Endothelial cell of umbilical vein (primary cell): ENCODE measurements at regions of chr5 and their contacts with region 1.

Region 1: GRCh38 chr5:39283231-39283818 is 64.0 kb upstream of the FYB1 start:
- DNase-seq: peak; percentile 76
- H3K4me3 ChIP-seq: no peak overlapping the region
- H3K27ac ChIP-seq: no peak overlapping the region
- H3K4me1 ChIP-seq: no peaks in the 10 kb centered on the region
- H3K27me3 ChIP-seq: no peaks in the 10 kb centered on the region
- CTCF ChIP-seq: peak; percentile 50 to 67
- POLR2A ChIP-seq: no peak

Region 2: GRCh38 chr5:38208782-38209378 is 1074.4 kb before region 1 on chr5:
- CTCF ChIA-PET with region 1: no interaction called
- POLR2A ChIA-PET with region 1: no interaction called
- dilution Hi-C with region 1: no loop called
- intact Hi-C with region 1: loop called (anchors 10 kb)
- DNase-seq: peak; percentile 22
- H3K4me3 ChIP-seq: no peak overlapping the region
- H3K27ac ChIP-seq: no peak overlapping the region
- H3K4me1 ChIP-seq: no peaks in the 10 kb centered on the region
- H3K27me3 ChIP-seq: no peaks in the 10 kb centered on the region
- CTCF ChIP-seq: peak; percentile 21 to 33
- POLR2A ChIP-seq: no peak

Region 3: DNA sequence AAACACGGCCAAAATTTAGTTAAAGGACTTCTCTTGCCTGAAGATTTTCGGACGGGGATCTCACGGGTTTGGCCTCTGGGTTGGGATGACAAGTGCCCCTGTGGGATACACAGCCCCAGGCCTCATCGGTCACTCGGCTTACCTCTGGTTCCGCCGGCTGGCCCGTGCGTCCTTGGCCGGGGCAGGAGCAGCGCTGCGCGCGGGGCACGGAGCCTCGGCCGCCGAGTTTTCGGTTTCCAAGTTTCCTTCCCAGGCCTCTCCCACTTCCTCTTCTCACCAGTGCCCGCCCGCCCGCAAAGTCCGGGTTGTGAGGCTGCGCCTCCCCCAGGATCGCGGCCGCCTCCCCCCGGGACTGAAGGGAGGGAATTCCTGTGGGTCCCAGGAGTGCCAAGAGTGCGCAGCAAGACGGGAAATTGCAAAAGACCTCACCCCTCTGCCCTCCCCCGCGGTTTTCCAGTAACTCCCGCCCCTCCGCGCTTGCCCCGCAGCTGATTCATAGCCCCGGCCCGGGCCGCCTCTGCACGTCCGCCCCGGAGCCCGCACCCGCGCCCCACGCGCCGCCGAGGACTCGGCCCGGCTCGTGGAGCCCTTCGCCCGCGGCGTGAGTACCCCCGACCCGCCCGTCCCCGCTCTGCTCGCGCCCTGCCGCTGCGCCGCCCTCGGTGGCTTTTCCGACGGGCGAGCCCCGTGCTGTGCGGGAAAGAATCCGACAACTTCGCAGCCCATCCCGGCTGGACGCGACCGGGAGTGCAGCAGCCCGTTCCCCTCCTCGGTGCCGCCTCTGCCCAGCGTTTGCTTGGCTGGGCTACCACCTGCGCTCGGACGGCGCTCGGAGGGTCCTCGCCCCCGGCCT is 437.6 kb before region 1 on chr5 and contains the start of gene OSMR:
- CTCF ChIA-PET with region 1: no interaction called
- POLR2A ChIA-PET with region 1: no interaction called
- dilution Hi-C with region 1: no loop called
- intact Hi-C with region 1: loop called (anchors 10 kb)
- DNase-seq: peak; percentile 94
- H3K4me3 ChIP-seq: peak within 1 kb of the TSS; percentile 77 to 86 (median 85)
- H3K27ac ChIP-seq: peak within 1 kb of the TSS; percentile 83
- H3K4me1 ChIP-seq: peaks cover 7% of the 10 kb centered on the region
- H3K27me3 ChIP-seq: peaks cover 3 to 6% of the 10 kb centered on the region in 2 experiments
- CTCF ChIP-seq: no peak
- POLR2A ChIP-seq: peak; percentile 76
- total RNA-seq, gene OSMR: 12.8 and 19.7 TPM in 2 replicates

Region 4: DNA sequence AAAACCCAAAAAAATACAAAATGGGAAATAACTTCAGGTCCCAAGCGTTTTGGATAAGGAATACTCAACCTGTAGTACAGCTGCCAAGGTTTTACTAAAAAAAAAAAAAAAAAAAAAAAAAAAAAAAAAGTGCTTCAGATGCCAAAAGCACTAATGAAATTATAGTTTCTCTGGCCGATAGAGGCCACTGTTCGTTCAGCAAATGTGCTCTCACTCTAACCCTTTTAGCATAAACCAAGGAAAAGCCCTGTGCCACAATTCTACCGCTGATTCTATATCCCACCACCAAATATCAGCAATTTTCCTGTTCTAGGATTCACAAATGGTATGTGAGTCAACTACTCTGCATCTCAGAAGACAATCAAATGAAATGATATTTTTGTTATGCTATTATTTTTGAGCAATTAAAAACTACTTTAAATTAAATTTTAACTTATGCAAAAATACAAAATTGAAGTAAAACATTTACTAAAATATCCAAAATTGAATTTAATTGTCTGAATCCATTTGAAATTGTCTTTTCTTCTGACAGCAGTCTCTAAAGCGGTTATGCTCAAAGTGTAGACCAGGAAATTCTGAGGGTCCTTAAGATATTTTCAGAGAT is 288.9 kb before region 1 on chr5:
- CTCF ChIA-PET with region 1: interaction called, 4 read pairs
- POLR2A ChIA-PET with region 1: no interaction called
- dilution Hi-C with region 1: no loop called
- intact Hi-C with region 1: loop called (anchors 1 kb)
- DNase-seq: peak; percentile 76
- H3K4me3 ChIP-seq: no peak overlapping the region
- H3K27ac ChIP-seq: no peak overlapping the region
- H3K4me1 ChIP-seq: no peaks in the 10 kb centered on the region
- H3K27me3 ChIP-seq: no peaks in the 10 kb centered on the region
- CTCF ChIP-seq: peak; percentile 33 to 50
- POLR2A ChIP-seq: no peak

Region 5: DNA sequence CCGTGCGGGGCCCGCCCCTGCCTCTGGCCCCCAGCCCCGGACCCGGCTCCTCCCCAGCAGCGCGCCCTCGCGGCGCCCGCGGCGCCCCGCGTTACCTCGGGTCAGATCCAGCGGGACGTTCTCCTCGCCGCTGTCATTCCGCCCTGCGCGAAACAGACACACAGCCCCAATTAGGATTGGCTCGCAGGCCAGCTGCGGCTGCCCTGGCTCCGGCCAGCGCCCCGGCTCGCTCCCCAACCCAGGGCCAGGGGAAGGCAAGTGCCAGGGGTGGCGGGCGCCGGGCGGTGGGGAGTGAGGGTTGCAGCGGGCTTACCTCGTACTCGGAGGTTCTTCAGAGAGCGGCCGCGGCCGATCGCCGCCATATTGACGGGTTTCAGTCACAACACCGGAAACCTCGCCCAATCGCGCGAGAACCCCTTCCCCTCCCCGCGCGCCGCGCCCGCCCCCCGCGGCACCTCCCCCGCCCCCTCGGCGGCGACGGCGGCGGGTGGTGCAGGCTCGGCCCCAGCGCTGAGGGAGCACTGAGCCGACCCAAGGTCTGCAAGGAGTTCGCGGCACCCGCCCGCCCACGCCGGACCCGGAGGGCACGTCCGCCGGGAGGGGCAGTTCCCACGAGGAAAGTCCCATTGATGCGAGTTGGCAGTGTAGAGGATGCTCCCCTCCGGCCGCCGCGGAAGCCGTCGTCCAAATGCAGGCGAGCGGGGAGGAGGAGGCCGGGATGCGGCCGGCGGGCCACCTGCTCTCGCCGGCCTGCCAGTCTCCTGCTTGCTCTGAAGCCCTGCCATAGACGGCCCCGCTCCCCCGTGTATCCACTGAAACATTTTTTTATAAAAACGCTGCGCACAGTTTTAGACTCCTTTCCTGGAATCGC is 209.1 kb before region 1 on chr5 and contains the start of gene RICTOR:
- CTCF ChIA-PET with region 1: interaction called, 3 read pairs
- POLR2A ChIA-PET with region 1: no interaction called
- dilution Hi-C with region 1: no loop called
- intact Hi-C with region 1: loop called (anchors 2 kb)
- DNase-seq: peak; percentile 91
- H3K4me3 ChIP-seq: peak within 1 kb of the TSS; percentile 89 to 99 (median 92)
- H3K27ac ChIP-seq: peak within 1 kb of the TSS; percentile 90
- H3K4me1 ChIP-seq: peaks cover 35% of the 10 kb centered on the region
- H3K27me3 ChIP-seq: no peaks in the 10 kb centered on the region
- CTCF ChIP-seq: no peak
- POLR2A ChIP-seq: peak; percentile 83
- total RNA-seq, gene RICTOR: 38.0 and 39.5 TPM in 2 replicates

Region 6: GRCh38 chr5:39340506-39340905 is 57.2 kb after region 1 on chr5:
- CTCF ChIA-PET with region 1: no interaction called
- POLR2A ChIA-PET with region 1: no interaction called
- dilution Hi-C with region 1: no loop called
- intact Hi-C with region 1: no loop called
- DNase-seq: no peak
- H3K4me3 ChIP-seq: no peak overlapping the region
- H3K27ac ChIP-seq: no peak overlapping the region
- H3K4me1 ChIP-seq: no peaks in the 10 kb centered on the region
- H3K27me3 ChIP-seq: no peaks in the 10 kb centered on the region
- CTCF ChIP-seq: no peak
- POLR2A ChIP-seq: no peak

Region 7: GRCh38 chr5:39360471-39361111 is 77.3 kb after region 1 on chr5:
- CTCF ChIA-PET with region 1: no interaction called
- POLR2A ChIA-PET with region 1: no interaction called
- dilution Hi-C with region 1: no loop called
- intact Hi-C with region 1: loop called (anchors 2 kb)
- DNase-seq: peak; percentile 89
- H3K4me3 ChIP-seq: peak overlapping the region in 1 of 3 experiments; percentile 18
- H3K27ac ChIP-seq: peak overlapping the region; percentile 99
- H3K4me1 ChIP-seq: peaks cover 44% of the 10 kb centered on the region
- H3K27me3 ChIP-seq: no peaks in the 10 kb centered on the region
- CTCF ChIP-seq: no peak
- POLR2A ChIP-seq: no peak

Region 8: GRCh38 chr5:39570403-39571027 is 287.2 kb after region 1 on chr5:
- CTCF ChIA-PET with region 1: interaction called, 3 read pairs
- POLR2A ChIA-PET with region 1: no interaction called
- dilution Hi-C with region 1: no loop called
- intact Hi-C with region 1: loop called (anchors 5 kb)
- DNase-seq: peak; percentile 61
- H3K4me3 ChIP-seq: no peak overlapping the region
- H3K27ac ChIP-seq: no peak overlapping the region
- H3K4me1 ChIP-seq: peaks cover 4% of the 10 kb centered on the region
- H3K27me3 ChIP-seq: no peaks in the 10 kb centered on the region
- CTCF ChIP-seq: peak; percentile 35 to 37
- POLR2A ChIP-seq: no peak